ENCODE measurements at regions of chr5 and their contacts with region 1.

Region 1: GRCh38 chr5:132007399-132008165 is 3.9 kb downstream of the ACSL6 start:
- DNase-seq: peak; percentile 79
- CTCF ChIP-seq: peak; percentile 51

Region 2: DNA sequence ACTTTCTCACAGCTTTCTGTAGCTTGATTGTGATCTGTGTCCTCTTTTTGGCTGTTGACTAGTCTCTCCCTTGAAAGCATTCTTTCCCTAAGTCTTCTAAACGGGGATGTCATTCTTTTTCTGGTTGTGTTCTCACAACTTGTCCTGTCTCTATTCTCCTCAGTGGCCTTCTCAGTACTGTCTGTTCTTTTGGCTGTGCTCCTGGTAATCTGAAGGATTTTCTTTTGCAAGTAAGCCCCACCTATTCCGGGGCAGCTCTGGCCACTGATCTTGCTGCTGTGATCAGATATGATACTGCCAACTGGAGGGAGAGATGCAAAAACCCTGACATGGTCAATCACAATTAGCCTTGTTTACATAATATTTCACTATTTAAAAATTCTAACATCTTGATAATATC is 571.5 kb before region 1 on chr5:
- in situ Hi-C with region 1: loop called (anchors 25 kb)
- DNase-seq: no peak
- CTCF ChIP-seq: no peak

Region 3: DNA sequence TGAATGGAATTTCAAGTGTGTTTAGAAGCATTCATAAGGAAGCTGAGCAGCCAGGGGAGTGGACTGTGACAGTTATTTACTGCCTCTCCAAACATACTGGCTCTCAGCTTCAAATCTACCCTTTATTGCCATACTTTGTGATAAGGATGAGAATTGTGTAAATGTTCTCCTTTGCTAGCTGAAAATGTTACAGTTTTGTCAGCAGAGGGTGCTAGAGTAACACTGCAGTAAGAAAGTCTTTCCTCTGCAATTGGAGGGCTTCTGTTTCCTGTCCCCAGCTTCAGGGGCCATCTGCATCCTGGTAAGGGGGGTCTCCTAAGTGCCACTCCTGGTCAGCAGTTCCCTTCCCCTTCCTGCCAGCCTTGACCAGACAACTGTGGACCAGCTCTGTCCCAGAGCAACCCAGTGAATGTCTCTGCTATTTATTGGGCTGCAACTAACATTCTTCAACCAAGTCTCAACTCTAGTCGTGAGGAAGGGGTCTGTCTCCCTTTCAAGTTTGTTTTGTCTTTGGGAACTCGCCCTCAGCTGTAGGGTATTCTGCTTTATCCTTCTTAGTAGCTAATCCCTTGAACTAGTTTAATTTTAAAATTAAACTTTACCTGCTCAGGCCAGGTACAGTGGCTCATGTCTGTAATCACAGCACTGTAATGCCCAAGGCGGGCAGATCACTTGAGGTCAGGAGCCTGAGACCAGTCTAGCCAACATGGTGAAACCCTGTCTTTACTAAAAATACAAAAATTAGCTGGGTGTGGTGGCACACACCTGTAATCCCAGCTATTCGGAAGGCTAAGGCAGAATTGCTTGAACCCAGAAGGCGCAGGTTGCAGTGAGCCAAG is 417.9 kb before region 1 on chr5:
- in situ Hi-C with region 1: loop called (anchors 10 kb)
- DNase-seq: peak; percentile 54
- CTCF ChIP-seq: peak; percentile 61

Region 4: DNA sequence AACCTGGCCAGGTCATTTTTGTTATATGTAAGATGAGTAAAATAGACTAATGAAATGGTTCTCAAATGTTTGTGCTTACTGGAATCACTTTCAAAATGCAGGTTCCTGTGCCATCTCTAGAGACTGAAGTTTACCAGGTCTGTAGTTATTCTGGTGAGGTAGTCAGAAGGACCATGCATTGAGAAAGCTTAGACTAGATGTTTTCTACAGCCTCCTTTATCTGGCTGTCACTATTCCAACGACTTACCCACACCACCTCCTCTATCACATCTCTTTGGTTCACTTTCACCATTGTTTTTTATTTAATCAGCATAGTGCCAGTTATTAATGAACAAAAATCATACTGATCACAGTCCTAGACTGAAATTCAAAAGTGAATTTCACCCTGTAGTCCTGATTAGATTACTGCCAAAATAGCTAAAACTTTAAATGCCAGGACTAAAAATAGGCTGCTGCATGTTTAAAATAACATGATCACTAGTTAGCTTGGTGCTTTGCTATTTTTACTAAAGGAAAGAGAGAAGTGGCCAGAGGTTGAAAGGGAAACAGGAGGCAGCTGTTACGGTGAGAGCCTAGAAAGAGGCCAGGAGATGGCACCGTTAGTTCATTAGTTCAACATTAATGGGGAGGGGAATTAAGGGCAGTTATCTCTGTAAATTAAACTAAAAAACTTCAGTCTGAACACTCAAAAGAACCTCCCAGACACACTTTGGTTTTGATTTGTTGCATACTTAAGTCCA is 196.9 kb before region 1 on chr5:
- in situ Hi-C with region 1: loop called (anchors 10 kb)
- DNase-seq: peak; percentile 66
- CTCF ChIP-seq: peak; percentile 48

Measured in GM13976 (cell line).